Activated naive CD4-positive, alpha-beta T cell treated with anti-CD3 and anti-CD28 coated beads for 36 hours (primary cell): ENCODE measurements at regions of chr5 and their contacts with region 1.

Region 1: DNA sequence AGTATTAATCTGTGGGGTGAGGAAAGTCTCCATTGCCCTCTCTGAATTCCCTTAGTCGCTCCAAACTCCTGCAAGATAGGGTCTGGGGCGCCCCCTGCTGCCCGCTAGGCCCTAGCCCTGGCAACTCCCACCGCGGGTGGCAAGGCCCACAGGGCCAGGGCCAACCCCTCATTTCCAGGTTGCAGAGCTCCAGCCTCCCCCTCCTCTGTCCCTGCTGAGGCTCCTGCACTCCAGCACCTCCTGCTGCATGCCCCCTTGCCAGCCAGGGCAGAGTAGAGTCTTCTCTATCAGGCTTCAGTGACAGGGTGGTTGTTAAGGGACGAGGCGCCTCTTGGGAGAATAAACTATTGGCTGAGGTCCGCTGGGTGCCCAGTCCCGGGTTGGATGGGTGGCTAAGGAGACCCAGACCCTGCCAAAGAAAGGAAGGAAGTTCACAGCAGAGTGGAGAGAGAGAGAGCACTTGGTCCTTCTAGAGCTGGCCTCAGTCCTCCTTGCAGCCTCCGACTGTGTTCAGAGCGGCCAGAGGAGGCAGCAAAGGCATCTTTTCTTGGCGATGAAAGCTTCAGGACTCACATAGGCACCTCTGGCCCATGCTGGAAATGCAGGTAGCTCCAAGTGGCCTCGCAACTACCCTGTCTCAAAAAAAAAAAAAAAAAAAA is 45.6 kb downstream of the SAR1B start:
- DNase-seq: peak; percentile 94
- H3K4me3 Mint-ChIP-seq: no peak overlapping the region
- H3K27ac Mint-ChIP-seq: no peak overlapping the region
- H3K4me1 Mint-ChIP-seq: peaks cover 13% of the 10 kb centered on the region
- H3K27me3 Mint-ChIP-seq: no peaks in the 10 kb centered on the region

Region 2: GRCh38 chr5:134184155-134185135 is 402.6 kb before region 1 on chr5:
- CTCF ChIA-PET with region 1: interaction called, 7 read pairs
- intact Hi-C with region 1: loop called (anchors 1 kb)
- DNase-seq: peak; percentile 88
- H3K4me3 Mint-ChIP-seq: no peak overlapping the region
- H3K27ac Mint-ChIP-seq: no peak overlapping the region
- H3K4me1 Mint-ChIP-seq: no peaks in the 10 kb centered on the region
- H3K27me3 Mint-ChIP-seq: no peaks in the 10 kb centered on the region

Region 3: DNA sequence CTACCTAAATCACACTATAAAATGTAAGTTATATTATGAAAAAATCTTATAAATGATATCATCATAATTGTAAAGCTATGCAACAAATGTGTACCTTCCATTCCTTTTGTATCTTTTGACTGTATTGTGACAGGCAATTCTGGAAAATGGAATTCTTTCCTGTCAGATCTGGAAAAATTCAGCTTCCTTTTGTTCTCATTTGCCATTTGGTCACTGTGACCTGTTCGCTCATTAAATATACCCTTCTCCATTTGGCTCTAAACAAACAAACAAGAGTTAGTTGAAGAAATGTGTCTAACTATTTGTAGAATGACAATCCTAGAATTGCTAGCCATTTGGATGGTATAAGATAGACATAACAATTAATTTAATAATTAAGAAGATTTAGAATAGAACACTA is 282.7 kb before region 1 on chr5:
- CTCF ChIA-PET with region 1: interaction called, 67 read pairs
- intact Hi-C with region 1: loop called (anchors 1 kb)
- DNase-seq: no peak
- H3K4me3 Mint-ChIP-seq: no peak overlapping the region
- H3K27ac Mint-ChIP-seq: no peak overlapping the region
- H3K4me1 Mint-ChIP-seq: peaks cover 6% of the 10 kb centered on the region
- H3K27me3 Mint-ChIP-seq: no peaks in the 10 kb centered on the region

Region 4: GRCh38 chr5:134345996-134346395 is 241.0 kb before region 1 on chr5:
- CTCF ChIA-PET with region 1: no interaction called
- intact Hi-C with region 1: no loop called
- DNase-seq: no peak
- H3K4me3 Mint-ChIP-seq: no peak overlapping the region
- H3K27ac Mint-ChIP-seq: no peak overlapping the region
- H3K4me1 Mint-ChIP-seq: no peaks in the 10 kb centered on the region
- H3K27me3 Mint-ChIP-seq: no peaks in the 10 kb centered on the region

Region 5: GRCh38 chr5:134465816-134466240 is 121.2 kb before region 1 on chr5:
- CTCF ChIA-PET with region 1: interaction called, 13 read pairs
- intact Hi-C with region 1: no loop called
- DNase-seq: peak; percentile 73
- H3K4me3 Mint-ChIP-seq: peak overlapping the region; percentile 81
- H3K27ac Mint-ChIP-seq: peak overlapping the region; percentile 81
- H3K4me1 Mint-ChIP-seq: peaks cover 19% of the 10 kb centered on the region
- H3K27me3 Mint-ChIP-seq: no peaks in the 10 kb centered on the region

Region 6: DNA sequence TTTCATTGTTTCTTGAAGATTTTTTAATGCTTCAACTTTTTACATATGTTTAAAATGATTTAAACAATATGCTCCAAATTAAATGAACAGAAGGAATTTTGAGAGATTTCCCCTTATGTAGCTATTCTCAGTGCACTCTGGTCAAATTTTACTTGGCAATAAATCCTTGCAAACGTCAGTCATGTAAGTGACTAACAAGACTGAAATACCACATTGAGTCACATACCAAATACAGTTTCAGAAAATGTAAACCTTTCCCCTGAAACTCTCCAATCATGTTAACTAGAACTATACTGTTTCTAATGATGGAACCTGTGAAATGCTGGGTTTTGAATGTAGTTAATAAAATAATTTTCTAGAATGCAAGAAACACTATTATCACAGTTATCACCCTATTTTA is 16.1 kb after region 1 on chr5:
- CTCF ChIA-PET with region 1: interaction called, 28 read pairs
- intact Hi-C with region 1: no loop called
- DNase-seq: no peak
- H3K4me3 Mint-ChIP-seq: no peak overlapping the region
- H3K27ac Mint-ChIP-seq: no peak overlapping the region
- H3K4me1 Mint-ChIP-seq: peaks cover 42% of the 10 kb centered on the region
- H3K27me3 Mint-ChIP-seq: no peaks in the 10 kb centered on the region

Region 7: DNA sequence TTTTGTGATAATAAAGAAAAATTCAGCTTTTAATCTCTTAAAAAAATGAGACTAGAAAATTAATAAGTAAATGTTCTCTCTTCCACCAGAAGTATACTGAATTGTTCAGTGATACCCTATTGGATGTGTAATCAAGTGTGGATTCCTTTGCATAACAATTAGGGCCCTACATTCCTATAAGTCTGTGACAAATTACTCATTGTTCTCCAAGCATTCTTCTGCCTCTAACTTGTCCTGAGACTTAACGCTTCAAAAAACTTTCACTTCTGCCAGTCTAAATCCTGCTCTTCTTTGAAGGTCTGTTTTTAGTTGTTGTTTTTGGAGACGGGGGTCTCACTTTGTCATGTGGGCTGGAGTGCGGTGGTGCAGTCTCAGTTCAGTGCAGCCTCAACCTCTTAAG is 162.4 kb after region 1 on chr5:
- CTCF ChIA-PET with region 1: no interaction called
- intact Hi-C with region 1: no loop called
- DNase-seq: no peak
- H3K4me3 Mint-ChIP-seq: no peak overlapping the region
- H3K27ac Mint-ChIP-seq: no peak overlapping the region
- H3K4me1 Mint-ChIP-seq: no peaks in the 10 kb centered on the region
- H3K27me3 Mint-ChIP-seq: no peaks in the 10 kb centered on the region

Region 8: DNA sequence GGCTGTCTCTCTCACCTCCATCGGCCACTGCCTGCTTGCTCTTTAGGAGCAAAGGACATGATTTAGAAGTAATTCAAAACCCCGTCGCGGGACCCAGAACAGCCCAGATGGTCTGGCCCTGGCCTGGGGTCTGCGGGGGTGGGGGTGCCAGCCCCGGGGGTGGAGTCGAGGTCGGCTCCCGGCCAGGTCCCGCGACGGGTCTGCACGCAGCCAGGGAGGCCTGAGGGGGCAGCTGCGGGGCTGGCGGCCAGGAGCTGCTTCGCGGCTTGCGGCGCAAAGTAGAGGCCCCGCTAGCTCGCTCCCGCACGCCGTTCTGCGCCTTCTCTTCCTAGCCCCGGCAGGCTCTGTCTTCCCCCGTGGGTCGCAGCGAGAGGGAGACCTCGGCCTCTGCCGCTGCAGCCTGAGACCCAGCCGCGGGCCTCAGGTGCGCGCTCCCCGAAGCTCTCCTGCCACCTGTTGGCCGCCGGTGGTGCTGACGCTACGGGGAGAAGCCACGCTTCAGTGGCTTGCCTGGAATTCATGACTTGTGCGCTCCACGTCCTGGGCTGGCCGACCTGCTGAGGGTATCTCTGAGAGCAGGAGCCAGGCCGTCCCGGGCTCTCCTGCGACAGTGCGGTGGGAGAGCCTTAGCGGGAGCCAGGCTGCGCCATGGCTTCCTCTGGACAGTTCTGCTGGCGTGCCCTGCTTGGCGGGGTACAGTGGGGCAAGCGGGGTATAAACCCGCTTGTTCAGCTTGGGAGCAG is 604.3 kb after region 1 on chr5:
- CTCF ChIA-PET with region 1: no interaction called
- intact Hi-C with region 1: loop called (anchors 5 kb)
- DNase-seq: peak; percentile 84
- H3K4me3 Mint-ChIP-seq: peak overlapping the region; percentile 70
- H3K27ac Mint-ChIP-seq: no peak overlapping the region
- H3K4me1 Mint-ChIP-seq: peaks cover 2% of the 10 kb centered on the region
- H3K27me3 Mint-ChIP-seq: peaks cover 5% of the 10 kb centered on the region